Endothelial cell of umbilical vein (primary cell): ENCODE measurements at regions of chr1 and their contacts with region 1.

Region 1: DNA sequence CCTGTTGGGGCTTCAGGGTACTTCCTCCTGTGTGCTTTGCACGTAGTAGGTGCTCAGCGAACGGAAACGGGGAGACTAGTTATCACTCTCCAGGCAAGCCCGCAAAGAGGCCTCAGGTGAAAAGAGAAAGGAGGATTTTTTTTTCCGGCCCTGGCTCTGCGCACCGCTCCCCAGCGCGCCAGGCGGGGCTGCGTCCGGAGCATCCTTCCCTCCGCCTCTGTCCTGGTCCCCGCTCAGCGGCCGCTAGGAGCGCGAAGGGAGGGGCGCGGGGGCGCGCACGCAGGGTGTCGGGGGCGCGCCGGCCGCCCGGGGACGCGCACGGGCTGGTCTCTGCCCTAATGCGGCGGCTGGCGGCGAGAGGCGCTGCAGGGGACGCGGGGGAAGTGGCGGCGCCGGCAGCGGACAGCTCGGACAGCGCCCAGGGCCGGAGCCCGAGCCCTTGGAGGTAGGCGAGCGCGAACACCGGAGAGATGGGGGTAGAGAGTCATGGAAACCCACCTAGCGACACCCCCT is 42.3 kb upstream of the NFASC start:
- DNase-seq: peak; percentile 2
- H3K4me3 ChIP-seq: no peak overlapping the region
- H3K27ac ChIP-seq: no peak overlapping the region
- H3K4me1 ChIP-seq: no peaks in the 10 kb centered on the region
- H3K27me3 ChIP-seq: peaks cover 25 to 29% of the 10 kb centered on the region in 2 experiments
- CTCF ChIP-seq: no peak
- POLR2A ChIP-seq: no peak

Region 2: GRCh38 chr1:204730826-204731459 is 97.5 kb before region 1 on chr1:
- CTCF ChIA-PET with region 1: no interaction called
- POLR2A ChIA-PET with region 1: no interaction called
- dilution Hi-C with region 1: no loop called
- intact Hi-C with region 1: no loop called
- DNase-seq: no peak
- H3K4me3 ChIP-seq: no peak overlapping the region
- H3K27ac ChIP-seq: no peak overlapping the region
- H3K4me1 ChIP-seq: no peaks in the 10 kb centered on the region
- H3K27me3 ChIP-seq: peaks cover 11 to 14% of the 10 kb centered on the region in 2 experiments
- CTCF ChIP-seq: no peak
- POLR2A ChIP-seq: no peak

Region 3: DNA sequence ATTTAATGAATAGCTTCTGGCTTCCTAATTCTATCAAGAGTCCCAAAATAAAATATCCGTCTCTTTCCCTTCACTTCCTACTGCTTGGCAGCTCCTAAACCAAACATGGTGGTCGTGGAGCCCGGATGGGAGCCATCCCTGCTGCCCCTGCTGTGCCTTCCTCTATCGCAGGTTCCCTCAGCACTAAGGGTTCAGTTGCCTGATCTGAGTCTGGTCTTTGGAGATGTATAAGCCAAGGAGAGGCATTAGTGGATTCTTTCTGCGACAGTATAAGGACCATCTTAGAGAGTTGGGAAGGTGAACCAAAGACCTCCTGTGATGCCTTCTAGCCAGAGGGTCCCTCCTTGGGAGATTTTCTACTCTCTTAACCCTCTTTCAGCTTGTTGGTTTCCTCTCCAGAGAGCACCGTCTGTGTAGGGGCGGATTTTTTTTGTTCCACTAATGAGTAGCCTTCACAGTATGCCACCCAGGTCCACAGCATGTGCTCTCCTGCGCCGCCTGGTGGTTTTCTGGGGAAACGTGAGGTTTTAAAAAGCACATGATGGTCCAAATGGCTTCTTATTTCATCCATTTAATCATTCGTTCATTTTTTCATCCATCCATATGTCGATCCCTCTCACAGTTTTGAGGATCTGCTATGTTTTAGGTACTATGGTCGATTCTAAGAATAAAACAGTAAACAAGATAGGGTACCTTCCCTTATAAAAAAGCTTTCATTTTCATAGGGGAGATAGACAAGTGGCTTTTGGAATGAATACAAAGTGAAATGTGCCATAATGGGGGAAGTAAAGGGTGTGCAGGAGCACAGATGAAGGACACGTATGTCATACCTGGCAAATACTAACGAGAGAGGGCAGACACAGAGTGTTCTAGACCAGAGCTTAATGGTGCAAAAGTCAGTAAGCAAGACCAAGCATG is 113.3 kb after region 1 on chr1:
- CTCF ChIA-PET with region 1: interaction called, 3 read pairs
- POLR2A ChIA-PET with region 1: no interaction called
- dilution Hi-C with region 1: no loop called
- intact Hi-C with region 1: loop called (anchors 5 kb)
- DNase-seq: peak; percentile 63
- H3K4me3 ChIP-seq: no peak overlapping the region
- H3K27ac ChIP-seq: no peak overlapping the region
- H3K4me1 ChIP-seq: no peaks in the 10 kb centered on the region
- H3K27me3 ChIP-seq: peaks cover 5 to 10% of the 10 kb centered on the region in 2 experiments
- CTCF ChIP-seq: peak; percentile 78 to 86
- POLR2A ChIP-seq: no peak